K562 (cell line): ENCODE measurements at regions of chr13 and their contacts with region 1.

Region 1: DNA sequence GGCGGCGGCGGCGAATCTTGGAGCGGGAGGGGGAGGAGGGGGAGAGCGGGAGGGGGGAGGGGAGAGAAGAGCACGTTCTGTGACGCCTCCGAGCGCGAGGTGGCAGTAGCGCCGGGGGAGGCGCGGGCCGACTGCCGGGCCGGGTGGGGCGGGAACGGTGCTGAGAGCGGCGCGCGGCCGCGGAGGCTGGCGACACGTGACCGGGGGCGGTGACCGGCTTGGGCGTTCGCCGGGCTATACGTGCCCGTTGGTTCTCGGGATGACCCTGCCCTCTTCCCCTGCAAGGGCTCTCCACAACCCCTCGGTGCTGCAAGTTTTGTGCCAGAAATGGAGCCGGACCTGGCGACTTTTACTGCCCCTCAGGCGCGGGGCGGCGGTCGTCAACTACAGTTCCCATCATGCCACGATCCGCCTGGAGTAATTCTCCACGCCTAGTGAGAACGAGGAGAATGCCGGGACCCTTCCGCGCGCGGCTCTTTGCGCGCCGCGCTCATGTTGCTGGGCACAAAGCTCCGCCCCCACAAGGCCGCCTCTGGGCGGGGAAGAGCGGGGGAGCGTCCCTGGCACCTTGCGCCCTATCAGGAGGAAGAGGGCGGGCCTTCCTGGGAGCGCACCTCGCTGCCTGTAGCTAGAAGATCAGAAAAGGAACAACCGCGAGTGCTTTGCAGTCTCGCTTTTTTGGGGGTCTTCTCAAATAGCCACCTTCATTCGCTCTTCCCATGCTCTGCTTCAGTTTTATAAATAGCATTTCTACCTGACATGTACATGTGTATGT is at the start of gene KPNA3:
- DNase-seq: peak; percentile 85 to 94 (median 88)
- ATAC-seq: peak; percentile 93
- H3K4me3 ChIP-seq: peak within 1 kb of the TSS; percentile 78
- H3K27ac ChIP-seq: peak within 1 kb of the TSS; percentile 96
- H3K4me1 ChIP-seq: peaks cover 21 to 22% of the 10 kb centered on the region in 2 experiments; a peak in 4 of 5 replicates
- H3K27me3 ChIP-seq: no peaks in the 10 kb centered on the region
- CTCF ChIP-seq: peak in 2 of 3 experiments; percentile 20 to 26; a peak in 3 of 6 replicates
- EP300 ChIP-seq: no peak
- POLR2A ChIP-seq: peak; percentile 83
- RAD21 ChIP-seq: no peak
- polyA plus RNA-seq, gene KPNA3: 10.0 to 11.0 TPM

Region 2: GRCh38 chr13:49652355-49653305 is 140.1 kb before region 1 on chr13:
- CTCF ChIA-PET with region 1: no interaction called
- POLR2A ChIA-PET with region 1: no interaction called
- in situ Hi-C with region 1: no loop called
- intact Hi-C with region 1: loop called (anchors 5 kb)
- DNase-seq: peak; percentile 48 to 64 (median 55)
- ATAC-seq: peak; percentile 95
- H3K4me3 ChIP-seq: no peak overlapping the region
- H3K27ac ChIP-seq: no peak overlapping the region
- H3K4me1 ChIP-seq: no peaks in the 10 kb centered on the region
- H3K27me3 ChIP-seq: no peaks in the 10 kb centered on the region
- CTCF ChIP-seq: peak; percentile 58 to 66 (median 64)
- EP300 ChIP-seq: no peak
- POLR2A ChIP-seq: no peak
- RAD21 ChIP-seq: peak; percentile 32 to 67

Region 3: GRCh38 chr13:49669735-49670309 is 122.9 kb before region 1 on chr13:
- CTCF ChIA-PET with region 1: no interaction called
- POLR2A ChIA-PET with region 1: no interaction called
- in situ Hi-C with region 1: no loop called
- intact Hi-C with region 1: loop called (anchors 5 kb)
- DNase-seq: peak; percentile 40 to 57 (median 49)
- ATAC-seq: peak; percentile 94
- H3K4me3 ChIP-seq: no peak overlapping the region
- H3K27ac ChIP-seq: no peak overlapping the region
- H3K4me1 ChIP-seq: no peaks in the 10 kb centered on the region
- H3K27me3 ChIP-seq: no peaks in the 10 kb centered on the region
- CTCF ChIP-seq: peak; percentile 56 to 69 (median 57); a peak in 5 of 6 replicates
- EP300 ChIP-seq: no peak
- POLR2A ChIP-seq: no peak
- RAD21 ChIP-seq: peak; percentile 76 to 80

Region 4: GRCh38 chr13:49781806-49782205 is 10.9 kb before region 1 on chr13:
- CTCF ChIA-PET with region 1: no interaction called
- POLR2A ChIA-PET with region 1: interaction called, 11 read pairs
- in situ Hi-C with region 1: no loop called
- intact Hi-C with region 1: no loop called
- DNase-seq: no peak
- ATAC-seq: no peak
- H3K4me3 ChIP-seq: no peak overlapping the region
- H3K27ac ChIP-seq: no peak overlapping the region
- H3K4me1 ChIP-seq: peaks cover 0 to 5% of the 10 kb centered on the region in 2 experiments; a peak in 2 of 5 replicates
- H3K27me3 ChIP-seq: no peaks in the 10 kb centered on the region
- CTCF ChIP-seq: no peak
- EP300 ChIP-seq: no peak
- POLR2A ChIP-seq: no peak
- RAD21 ChIP-seq: no peak

Region 5: GRCh38 chr13:49821216-49822030 is 28.7 kb after region 1 on chr13:
- CTCF ChIA-PET with region 1: no interaction called
- POLR2A ChIA-PET with region 1: interaction called, 3 read pairs
- in situ Hi-C with region 1: no loop called
- intact Hi-C with region 1: loop called (anchors 1 kb)
- DNase-seq: peak in 1 of 4 experiments; percentile 29
- ATAC-seq: peak; percentile 93
- H3K4me3 ChIP-seq: no peak overlapping the region
- H3K27ac ChIP-seq: no peak overlapping the region
- H3K4me1 ChIP-seq: no peaks in the 10 kb centered on the region; a peak in 3 of 5 replicates
- H3K27me3 ChIP-seq: peaks cover 0 to 3% of the 10 kb centered on the region in 2 experiments; a peak in 2 of 5 replicates
- CTCF ChIP-seq: peak; percentile 45 to 56 (median 55)
- EP300 ChIP-seq: no peak
- POLR2A ChIP-seq: no peak
- RAD21 ChIP-seq: peak; percentile 28 to 56; a peak in 3 of 4 replicates

Region 6: DNA sequence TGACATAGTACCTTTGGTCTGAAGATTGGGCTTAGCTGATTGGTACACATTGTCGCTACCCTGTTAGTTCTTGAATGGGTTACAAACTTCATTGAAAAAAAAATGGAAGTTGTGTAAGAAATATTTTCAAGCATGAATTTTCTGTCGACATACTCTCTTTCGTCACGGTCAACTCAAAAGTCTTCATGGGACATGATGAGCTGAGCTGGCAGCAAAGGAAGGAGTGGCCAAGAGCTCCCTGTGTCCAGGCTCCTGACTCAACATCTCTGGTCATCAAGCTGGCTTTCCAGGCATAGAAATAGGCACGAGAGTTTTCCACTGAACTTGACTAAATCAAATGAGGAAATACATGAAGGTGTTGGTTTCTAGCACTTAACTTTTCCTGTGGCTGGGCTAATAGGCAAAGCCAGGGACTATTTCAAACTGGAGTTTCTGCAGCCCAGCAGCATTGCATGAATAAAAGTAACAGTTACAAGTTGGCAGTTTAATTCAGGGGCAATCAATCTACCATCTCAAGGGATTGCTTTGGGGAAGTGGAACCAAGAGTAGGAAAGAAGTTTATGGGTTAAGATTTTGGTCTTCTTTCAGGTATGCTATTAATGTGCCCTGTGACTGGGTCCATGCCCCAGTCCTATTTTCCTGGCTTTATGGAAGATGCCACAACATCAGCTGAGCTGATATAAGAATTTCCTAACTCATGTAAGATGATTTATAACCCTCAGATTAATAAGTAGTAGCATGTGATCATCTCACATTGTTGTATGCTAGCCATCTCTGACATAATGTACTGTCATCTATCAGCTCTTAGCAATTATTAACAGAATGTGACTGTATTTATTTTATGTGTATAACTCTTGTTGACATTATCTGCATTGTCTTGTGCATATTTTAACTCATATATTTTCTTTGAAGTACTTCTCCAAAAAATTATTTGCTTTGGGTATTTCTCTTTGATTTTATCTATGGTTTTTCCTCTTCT is 665.0 kb after region 1 on chr13:
- CTCF ChIA-PET with region 1: no interaction called
- POLR2A ChIA-PET with region 1: no interaction called
- in situ Hi-C with region 1: no loop called
- intact Hi-C with region 1: no loop called
- DNase-seq: no peak
- ATAC-seq: no peak
- H3K4me3 ChIP-seq: no peak overlapping the region
- H3K27ac ChIP-seq: no peak overlapping the region
- H3K4me1 ChIP-seq: peaks cover 0 to 18% of the 10 kb centered on the region in 2 experiments; a peak in 2 of 5 replicates
- H3K27me3 ChIP-seq: no peaks in the 10 kb centered on the region
- CTCF ChIP-seq: no peak
- EP300 ChIP-seq: no peak
- POLR2A ChIP-seq: no peak
- RAD21 ChIP-seq: no peak

Region 7: DNA sequence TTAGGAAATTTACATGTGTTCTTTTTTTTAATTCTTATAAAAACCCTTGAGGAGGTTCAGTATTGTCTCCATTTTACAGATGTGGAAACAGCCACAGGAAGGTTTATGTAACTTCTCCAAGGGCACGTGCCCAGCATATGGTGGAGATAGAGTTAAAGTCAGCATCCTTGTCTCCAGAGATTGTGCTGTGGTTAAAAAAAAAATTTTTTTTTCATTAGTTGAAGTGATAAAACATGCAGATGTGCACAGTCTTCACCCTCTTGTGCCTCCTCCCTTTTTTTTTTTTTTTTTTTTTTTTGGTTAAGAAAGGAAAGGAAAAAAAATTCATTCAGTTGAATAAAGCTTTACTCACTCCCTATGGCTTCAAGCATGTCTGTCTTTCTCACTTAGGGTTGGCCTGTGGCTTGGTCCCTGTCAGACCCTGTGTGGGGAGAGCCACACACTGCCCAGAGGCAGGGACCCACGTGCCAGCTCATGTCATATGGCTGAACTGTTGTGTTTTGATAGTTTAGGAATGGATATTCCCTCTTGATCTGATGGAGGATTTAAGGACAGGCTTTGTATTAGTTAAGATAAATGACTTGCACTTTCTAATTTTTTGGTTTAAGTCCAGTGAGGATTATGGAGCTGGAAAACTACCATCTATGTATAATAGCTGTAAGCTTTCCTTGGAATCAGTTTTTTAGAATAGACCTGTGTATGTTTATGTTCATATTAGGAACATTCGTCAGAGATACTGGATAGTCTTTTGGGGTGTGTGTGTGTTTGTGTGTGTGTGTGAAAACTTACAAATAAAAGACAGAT is 1136.1 kb after region 1 on chr13:
- CTCF ChIA-PET with region 1: no interaction called
- POLR2A ChIA-PET with region 1: no interaction called
- in situ Hi-C with region 1: no loop called
- intact Hi-C with region 1: no loop called
- DNase-seq: no peak
- ATAC-seq: peak; percentile 62; the same call in 2 of the 3 replicates
- H3K4me3 ChIP-seq: no peak overlapping the region
- H3K27ac ChIP-seq: no peak overlapping the region
- H3K4me1 ChIP-seq: peaks cover 2 to 4% of the 10 kb centered on the region in 2 experiments; a peak in 3 of 5 replicates
- H3K27me3 ChIP-seq: no peaks in the 10 kb centered on the region
- CTCF ChIP-seq: no peak
- EP300 ChIP-seq: no peak
- POLR2A ChIP-seq: no peak
- RAD21 ChIP-seq: no peak